ENCODE measurements at regions of chr5 and their contacts with region 1.

Region 1: DNA sequence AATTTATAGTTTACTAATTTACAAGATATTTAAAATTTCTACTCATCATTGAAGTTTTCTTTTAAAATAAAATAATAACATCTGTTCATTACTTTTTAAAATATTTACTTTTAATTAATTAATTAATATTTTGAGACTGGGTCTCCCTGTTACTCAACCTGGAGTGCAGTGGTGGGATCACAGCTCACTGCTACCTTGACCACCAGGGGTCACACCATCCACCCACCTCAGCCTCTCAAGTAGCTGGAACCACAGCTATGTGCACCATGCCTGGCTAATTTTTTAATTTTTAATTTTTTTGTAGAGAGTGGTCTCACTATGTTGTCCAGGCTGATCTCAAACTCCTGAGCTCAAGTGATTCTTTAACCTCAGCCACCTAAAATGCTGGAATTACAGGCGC is 1013.6 kb downstream of the CDH9 start:
- DNase-seq: peak; percentile 42
- ATAC-seq: peak; percentile 88
- H3K4me3 Mint-ChIP-seq: no peak overlapping the region
- H3K27ac Mint-ChIP-seq: no peak overlapping the region
- H3K4me1 Mint-ChIP-seq: no peaks in the 10 kb centered on the region
- H3K27me3 Mint-ChIP-seq: no peaks in the 10 kb centered on the region
- CTCF ChIP-seq: peak; percentile 44; the same call in 1 of the 2 replicates

Region 2: GRCh38 chr5:26700759-26701384 is 676.1 kb after region 1 on chr5:
- CTCF ChIA-PET with region 1: interaction called, 13 read pairs
- POLR2A ChIA-PET with region 1: no interaction called
- DNase-seq: peak; percentile 28
- ATAC-seq: peak; percentile 66
- H3K4me3 Mint-ChIP-seq: no peak overlapping the region
- H3K27ac Mint-ChIP-seq: no peak overlapping the region
- H3K4me1 Mint-ChIP-seq: no peaks in the 10 kb centered on the region
- H3K27me3 Mint-ChIP-seq: no peaks in the 10 kb centered on the region
- CTCF ChIP-seq: peak; percentile 46